ENCODE measurements at regions of chr2 and their contacts with region 1.

Region 1: GRCh38 chr2:10072656-10073480 is 7.3 kb downstream of the CYS1 start:
- DNase-seq: peak; percentile 54 to 96 (median 80)

Region 2: GRCh38 chr2:10097352-10098148 is 24.7 kb after region 1 on chr2:
- intact Hi-C with region 1: loop called (anchors 2 kb)
- DNase-seq: peak; percentile 47 to 96 (median 65)

Region 3: DNA sequence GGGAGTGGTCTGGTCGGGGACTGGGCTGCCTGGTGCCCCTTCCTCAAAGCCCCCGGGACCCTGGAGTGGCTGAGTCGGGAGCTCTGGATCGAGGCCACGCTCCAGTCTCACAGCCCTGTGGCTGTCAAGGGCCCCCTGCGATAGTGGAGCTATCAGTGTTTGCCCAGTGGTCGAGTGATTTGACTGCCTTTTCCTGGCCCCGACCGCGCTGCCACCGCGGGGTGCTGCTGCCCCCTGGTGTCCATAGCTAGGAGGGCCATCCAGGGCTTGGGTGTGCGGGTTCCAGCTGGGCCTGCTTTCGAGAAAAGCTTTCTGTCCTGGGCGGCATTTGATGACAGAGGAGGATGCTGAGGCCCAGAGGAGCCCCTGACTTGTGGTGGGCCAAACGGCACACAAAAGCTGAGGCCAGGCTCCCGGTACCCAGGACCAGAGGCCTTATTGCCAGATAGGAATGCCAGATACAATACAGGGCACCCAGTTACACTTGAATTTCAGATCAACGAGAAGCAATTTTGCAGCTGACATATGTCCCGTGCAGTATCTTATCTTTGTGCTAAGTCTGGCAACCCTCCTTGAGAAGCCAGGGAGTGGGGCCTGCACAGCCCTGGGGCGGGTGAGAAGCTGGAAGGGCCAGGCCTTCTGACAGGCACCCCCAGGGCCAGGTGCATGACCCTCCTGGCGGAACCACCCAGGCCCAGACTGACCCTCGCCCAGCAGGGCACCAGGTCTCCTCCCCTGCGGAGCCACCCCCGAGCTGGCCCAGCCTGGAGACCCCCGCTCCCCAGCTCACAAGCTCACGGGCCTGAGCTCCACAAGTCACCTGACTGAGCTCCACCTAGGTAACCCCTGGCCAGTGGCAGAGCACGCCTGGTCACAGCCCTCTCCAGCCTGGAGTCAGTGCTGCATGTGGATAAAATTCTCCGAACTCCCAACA is 362.3 kb after region 1 on chr2:
- intact Hi-C with region 1: loop called (anchors 2 kb)
- DNase-seq: peak; percentile 54 to 96 (median 78)

Region 4: DNA sequence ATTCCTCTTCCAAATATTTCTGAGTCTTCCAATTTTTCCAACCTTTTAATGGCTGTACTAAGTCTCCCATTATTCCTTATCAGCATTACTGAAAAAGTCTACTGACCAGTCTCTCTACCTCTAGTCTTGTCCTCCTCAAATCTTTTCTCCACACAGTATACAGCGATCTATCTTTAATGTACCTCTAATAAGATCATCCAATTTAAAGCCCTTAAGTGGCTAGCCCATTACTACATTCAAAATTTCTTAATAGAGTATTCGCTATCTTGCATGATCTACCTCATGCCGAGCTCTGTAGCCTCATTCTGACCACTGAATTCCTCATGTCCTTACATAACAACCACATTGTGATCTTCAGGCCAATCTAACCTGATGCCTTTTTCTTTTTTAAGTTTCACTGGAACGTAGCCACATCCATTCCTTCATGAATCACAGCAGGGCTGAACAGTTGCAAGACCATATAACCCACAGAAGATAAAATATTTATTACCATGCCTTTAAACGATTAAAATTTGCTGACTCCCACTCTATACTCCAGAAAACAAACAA is 1140.3 kb after region 1 on chr2:
- intact Hi-C with region 1: no loop called
- DNase-seq: no peak